Tibial artery (tissue), 4 donors: ENCODE measurements at regions of chr1 and their contacts with region 1.

Region 1: GRCh38 chr1:43171876-43172526 is at the starts of genes CFAP57 and EBNA1BP2:
- DNase-seq: peak; percentile 89 to 94
- H3K4me3 ChIP-seq: peak within 1 kb of the TSS; percentile 67 to 95
- H3K27ac ChIP-seq: peak within 1 kb of the TSS; percentile 59 to 70
- H3K4me1 ChIP-seq: peaks cover 0 to 20% (median 10%) of the 10 kb centered on the region in 4 donors
- H3K27me3 ChIP-seq: peaks cover 0 to 10% of the 10 kb centered on the region in 2 donors
- CTCF ChIP-seq: no peak

Region 2: GRCh38 chr1:43367904-43368645 is 196.1 kb after region 1 on chr1 and contains the start of gene ELOVL1:
- intact Hi-C with region 1: loop called (anchors 10 kb)
- DNase-seq: peak; percentile 89 to 97
- H3K4me3 ChIP-seq: peak within 1 kb of the TSS; percentile 77 to 96
- H3K27ac ChIP-seq: peak within 1 kb of the TSS; percentile 93 to 97
- H3K4me1 ChIP-seq: peaks cover 0 to 32% (median 27%) of the 10 kb centered on the region in 4 donors
- H3K27me3 ChIP-seq: no peaks in the 10 kb centered on the region
- CTCF ChIP-seq: peak in 1 of 2 experiments; percentile 11